HCT116 (cell line): ENCODE measurements at regions of chr12 and their contacts with region 1.

Region 1: DNA sequence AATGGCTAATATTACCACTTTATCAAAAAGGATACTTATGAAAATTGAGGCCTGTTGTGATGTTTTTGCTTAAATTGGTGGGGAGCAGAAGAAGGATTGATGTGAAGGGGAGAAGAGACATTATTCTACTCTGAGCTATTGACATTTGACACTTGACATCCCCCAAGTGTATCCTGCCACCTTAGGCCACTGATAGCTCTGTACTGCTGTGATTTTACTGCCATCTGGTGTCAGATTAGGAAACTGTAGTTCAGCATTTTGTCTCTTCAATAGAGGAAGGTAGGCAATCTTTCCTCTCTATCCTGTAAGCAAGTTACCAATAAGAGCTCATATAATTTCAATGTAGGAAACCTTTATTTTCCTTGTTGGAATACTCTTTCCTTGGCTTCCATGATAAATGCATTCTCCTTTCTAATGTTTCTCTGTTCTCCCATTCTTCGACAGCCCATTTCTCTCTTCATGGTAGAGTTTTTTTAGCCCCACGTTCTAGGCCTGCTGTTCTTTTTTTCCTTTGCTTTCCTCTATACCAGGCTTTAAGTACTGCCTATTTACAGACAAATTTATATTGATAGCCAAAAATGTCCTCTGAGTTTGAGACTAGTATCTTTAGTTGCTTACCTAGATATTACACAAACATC is 46.3 kb downstream of the PPHLN1 start:
- DNase-seq: peak; percentile 42
- ATAC-seq: peak; percentile 93
- H3K4me3 ChIP-seq: no peak overlapping the region
- H3K27ac ChIP-seq: no peak overlapping the region
- H3K4me1 ChIP-seq: no peaks in the 10 kb centered on the region
- H3K27me3 ChIP-seq: no peaks in the 10 kb centered on the region
- CTCF ChIP-seq: peak; percentile 65 to 75 (median 74)
- POLR2A ChIP-seq: no peak
- RAD21 ChIP-seq: peak; percentile 81

Region 2: GRCh38 chr12:40946612-40947194 is 1425.6 kb before region 1 on chr12:
- CTCF ChIA-PET with region 1: interaction called, 3 read pairs
- POLR2A ChIA-PET with region 1: no interaction called
- RAD21 ChIA-PET with region 1: no interaction called
- intact Hi-C with region 1: loop called (anchors 10 kb)
- DNase-seq: peak; percentile 22
- ATAC-seq: no peak
- H3K4me3 ChIP-seq: no peak overlapping the region
- H3K27ac ChIP-seq: no peak overlapping the region
- H3K4me1 ChIP-seq: no peaks in the 10 kb centered on the region
- H3K27me3 ChIP-seq: no peaks in the 10 kb centered on the region
- CTCF ChIP-seq: peak; percentile 31 to 63 (median 53); a peak in 4 of 6 replicates
- POLR2A ChIP-seq: no peak
- RAD21 ChIP-seq: peak; percentile 71

Region 3: DNA sequence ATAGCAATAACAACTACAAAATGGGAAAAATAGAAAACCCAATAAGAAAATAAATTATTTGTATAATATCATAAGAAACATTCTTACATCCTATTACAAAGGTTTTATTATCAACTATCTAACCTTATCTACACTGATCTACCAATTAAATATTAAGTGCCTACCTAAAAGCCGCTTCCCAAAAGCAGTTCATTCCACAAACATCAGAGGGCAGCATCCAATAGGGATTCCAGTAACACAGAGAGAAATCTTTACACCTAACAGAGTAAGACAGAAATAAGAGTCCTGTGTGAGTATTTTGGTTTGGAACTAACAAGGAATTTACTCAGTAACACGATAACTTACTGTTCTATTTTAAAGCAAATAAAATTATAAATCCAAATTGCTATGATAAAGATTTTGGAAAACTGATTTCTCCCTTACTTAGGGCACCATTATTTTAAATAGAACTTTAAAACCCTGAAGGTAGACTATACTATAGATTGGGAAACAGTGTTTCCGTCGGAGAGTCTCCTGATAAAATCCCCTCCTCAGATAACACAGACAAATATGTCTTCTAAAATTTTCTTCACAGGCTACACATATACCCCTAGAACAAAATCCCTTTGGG is 242.6 kb before region 1 on chr12:
- CTCF ChIA-PET with region 1: interaction called, 9 read pairs
- POLR2A ChIA-PET with region 1: no interaction called
- RAD21 ChIA-PET with region 1: no interaction called
- intact Hi-C with region 1: loop called (anchors 1 kb)
- DNase-seq: peak; percentile 61
- ATAC-seq: peak; percentile 88
- H3K4me3 ChIP-seq: no peak overlapping the region
- H3K27ac ChIP-seq: no peak overlapping the region
- H3K4me1 ChIP-seq: peaks cover 0 to 13% of the 10 kb centered on the region in 2 experiments; a peak in 2 of 4 replicates
- H3K27me3 ChIP-seq: no peaks in the 10 kb centered on the region
- CTCF ChIP-seq: peak; percentile 74 to 85 (median 83)
- POLR2A ChIP-seq: no peak
- RAD21 ChIP-seq: peak; percentile 91

Region 4: DNA sequence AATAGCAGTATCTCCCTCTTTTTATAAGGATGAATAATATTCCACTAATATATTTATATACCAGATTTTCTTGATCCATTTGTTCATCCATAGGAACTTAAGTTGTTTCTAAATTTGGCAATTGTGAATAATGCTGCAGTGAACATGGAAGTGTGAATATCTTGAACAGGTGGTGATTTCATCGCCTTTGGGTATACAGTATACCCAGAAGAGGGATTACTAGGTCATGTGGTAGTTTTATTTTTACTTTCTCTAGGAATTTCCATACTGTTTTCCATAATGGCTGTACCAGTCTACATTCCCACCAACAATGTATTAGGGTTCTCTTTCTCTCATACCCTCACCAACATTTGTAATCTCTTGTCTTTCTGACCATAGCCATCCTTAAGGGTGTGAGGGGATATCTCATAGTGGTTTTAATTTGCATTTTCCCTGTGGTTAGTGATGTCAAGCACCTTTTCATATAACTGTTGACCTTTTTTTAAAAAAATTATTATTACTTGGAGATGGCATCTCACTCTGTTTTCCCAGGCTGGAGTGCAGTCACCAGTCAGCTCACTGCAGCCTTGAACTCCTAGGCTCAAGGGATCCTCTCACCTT is 25.8 kb before region 1 on chr12:
- CTCF ChIA-PET with region 1: interaction called, 12 read pairs
- POLR2A ChIA-PET with region 1: no interaction called
- RAD21 ChIA-PET with region 1: no interaction called
- intact Hi-C with region 1: no loop called
- DNase-seq: no peak
- ATAC-seq: no peak
- H3K4me3 ChIP-seq: no peak overlapping the region
- H3K27ac ChIP-seq: no peak overlapping the region
- H3K4me1 ChIP-seq: no peaks in the 10 kb centered on the region
- H3K27me3 ChIP-seq: no peaks in the 10 kb centered on the region
- CTCF ChIP-seq: no peak
- POLR2A ChIP-seq: no peak
- RAD21 ChIP-seq: no peak